ENCODE measurements at regions of chr11 and their contacts with region 1.

Region 1: GRCh38 chr11:103601225-103601846 is 435.1 kb upstream of the DDI1 start:
- DNase-seq: peak in 3 of 10 donors; percentile 23 to 40 (median 40)
- H3K4me3 ChIP-seq: no peak overlapping the region
- H3K27ac ChIP-seq: no peak overlapping the region
- H3K27me3 ChIP-seq: peaks cover 0 to 21% (median 0%) of the 10 kb centered on the region in 45 donors
- CTCF ChIP-seq: peak; percentile 42 to 87 (median 80)

Region 2: DNA sequence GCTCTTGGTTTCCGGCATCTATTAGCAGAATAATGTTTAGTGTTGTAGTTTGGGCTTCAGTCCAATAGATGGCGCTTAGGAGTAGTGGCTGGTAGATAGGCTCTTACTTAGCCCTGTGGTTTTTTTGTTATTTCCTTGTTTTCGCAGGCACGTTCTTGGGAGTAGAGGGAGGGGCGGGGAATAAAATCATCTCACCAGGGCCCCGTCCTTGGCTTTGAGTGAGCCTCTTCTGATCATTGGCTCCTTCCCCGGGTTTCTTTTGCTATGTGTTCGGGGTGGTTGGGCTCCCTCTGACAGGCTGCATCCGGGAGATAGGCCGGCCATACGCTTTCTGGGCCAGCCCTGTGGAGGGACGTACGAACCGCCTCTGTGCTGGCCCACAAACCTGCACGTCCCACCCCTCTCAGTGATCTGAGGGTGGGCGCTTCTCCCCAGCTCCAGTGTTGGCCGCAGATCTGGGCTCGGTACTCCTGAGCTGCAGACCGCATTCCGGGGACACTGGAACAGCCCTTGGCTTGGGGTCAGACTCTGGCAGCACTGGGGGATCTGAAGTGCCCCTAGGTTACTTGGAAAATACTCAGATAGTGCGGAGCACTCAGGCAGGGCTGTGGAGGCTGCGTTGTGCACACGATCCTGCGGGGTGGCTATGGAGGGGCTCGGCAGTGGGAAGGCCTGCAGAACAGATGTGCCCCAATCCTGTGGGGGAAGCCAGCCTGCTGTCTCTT is 275.1 kb before region 1 on chr11:
- intact Hi-C with region 1: loop called in 1 of 2 experiments (anchors 5 kb)
- DNase-seq: no peak
- H3K4me3 ChIP-seq: no peak overlapping the region
- H3K27ac ChIP-seq: no peak overlapping the region
- H3K27me3 ChIP-seq: no peaks in the 10 kb centered on the region
- CTCF ChIP-seq: peak in 55 of 56 donors; percentile 25 to 66 (median 53)